Activated T-helper 1 cell treated with anti-CD3 and anti-CD28 coated beads, Interleukin-12 subunit alpha, Interleukin-12 subunit beta, Interleukin-2, Interleukin-4 antibody, amounts not matched to agents 30 ng/mL and 10 ng/mL and 1 ng/mL, durations not matched to agents 14 hours and 24 hours and 36 hours (primary cell): ENCODE measurements at regions of chr9 and their contacts with region 1.

Region 1: GRCh38 chr9:129139993-129140396 is 28.8 kb downstream of the PTPA start:
- DNase-seq: peak; percentile 78
- H3K4me3 Mint-ChIP-seq: peak overlapping the region; percentile 82
- H3K27ac Mint-ChIP-seq: peak overlapping the region; percentile 92
- H3K4me1 Mint-ChIP-seq: peaks cover 32% of the 10 kb centered on the region
- H3K27me3 Mint-ChIP-seq: no peaks in the 10 kb centered on the region

Region 2: GRCh38 chr9:128902351-128903078 is 237.5 kb before region 1 on chr9:
- intact Hi-C with region 1: no loop called
- DNase-seq: peak; percentile 83
- H3K4me3 Mint-ChIP-seq: peak overlapping the region; percentile 66
- H3K27ac Mint-ChIP-seq: peak overlapping the region; percentile 96
- H3K4me1 Mint-ChIP-seq: peaks cover 65% of the 10 kb centered on the region
- H3K27me3 Mint-ChIP-seq: no peaks in the 10 kb centered on the region

Region 3: GRCh38 chr9:129110740-129111527 is 29.1 kb before region 1 on chr9 and contains the starts of genes CRAT and PTPA:
- intact Hi-C with region 1: loop called (anchors 1 kb)
- DNase-seq: peak; percentile 89
- H3K4me3 Mint-ChIP-seq: peak within 1 kb of the TSS; percentile 96
- H3K27ac Mint-ChIP-seq: peak within 1 kb of the TSS; percentile 94
- H3K4me1 Mint-ChIP-seq: peaks cover 36% of the 10 kb centered on the region
- H3K27me3 Mint-ChIP-seq: no peaks in the 10 kb centered on the region
- total RNA-seq, gene CRAT: 9.9 and 10.0 TPM in 2 replicates
- total RNA-seq, gene PTPA: 105 and 114 TPM in 2 replicates

Region 4: GRCh38 chr9:129413537-129414376 is 273.8 kb after region 1 on chr9:
- intact Hi-C with region 1: loop called (anchors 2 kb)
- DNase-seq: peak; percentile 98
- H3K4me3 Mint-ChIP-seq: peak overlapping the region; percentile 83
- H3K27ac Mint-ChIP-seq: peak overlapping the region; percentile 98
- H3K4me1 Mint-ChIP-seq: peaks cover 22% of the 10 kb centered on the region
- H3K27me3 Mint-ChIP-seq: peaks cover 1% of the 10 kb centered on the region

Region 5: DNA sequence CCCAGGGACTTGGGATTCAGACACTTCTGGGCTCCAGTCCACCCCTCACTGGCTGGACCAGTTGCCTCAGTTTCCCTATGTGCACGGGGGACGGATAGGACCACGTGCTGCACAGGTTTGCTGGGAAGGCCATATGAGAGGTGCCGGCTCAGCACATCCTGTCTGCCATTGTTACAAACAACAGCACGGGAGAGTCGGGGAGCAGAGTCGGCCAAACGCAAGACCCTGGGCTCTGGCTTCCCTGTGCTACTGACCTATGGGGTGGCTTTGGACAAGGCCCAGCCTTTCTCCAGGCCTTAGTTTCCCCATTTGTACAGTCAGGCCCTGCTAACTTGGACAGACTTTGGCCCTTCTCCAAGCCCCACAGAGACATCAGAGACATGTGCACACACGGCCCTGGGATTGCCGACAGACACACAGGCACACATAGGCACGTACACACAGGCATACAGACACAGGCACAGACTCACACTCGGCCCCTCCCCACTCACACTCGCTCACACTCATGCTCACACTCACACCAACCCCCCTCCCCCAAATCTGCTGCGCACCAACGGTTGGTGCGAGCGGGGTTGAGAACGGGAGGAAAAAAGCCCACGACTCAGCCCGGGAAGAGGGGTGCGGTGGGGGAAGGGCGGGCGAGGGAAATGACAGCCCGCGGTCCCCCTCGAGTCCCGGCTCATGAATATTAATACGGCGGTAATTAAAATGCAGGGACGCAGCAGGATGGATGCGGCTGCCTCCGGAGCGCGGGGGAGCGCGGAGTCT is 347.8 kb after region 1 on chr9:
- intact Hi-C with region 1: loop called (anchors 5 kb)
- DNase-seq: peak; percentile 17
- H3K4me3 Mint-ChIP-seq: peak overlapping the region; percentile 92
- H3K27ac Mint-ChIP-seq: peak overlapping the region; percentile 98
- H3K4me1 Mint-ChIP-seq: peaks cover 60% of the 10 kb centered on the region
- H3K27me3 Mint-ChIP-seq: peaks cover 5% of the 10 kb centered on the region

Region 6: GRCh38 chr9:129610473-129611301 is 470.7 kb after region 1 on chr9:
- intact Hi-C with region 1: loop called (anchors 1 kb)
- DNase-seq: peak; percentile 62
- H3K4me3 Mint-ChIP-seq: peak overlapping the region; percentile 82
- H3K27ac Mint-ChIP-seq: peak overlapping the region; percentile 83
- H3K4me1 Mint-ChIP-seq: peaks cover 38% of the 10 kb centered on the region
- H3K27me3 Mint-ChIP-seq: peaks cover 5% of the 10 kb centered on the region

Region 7: DNA sequence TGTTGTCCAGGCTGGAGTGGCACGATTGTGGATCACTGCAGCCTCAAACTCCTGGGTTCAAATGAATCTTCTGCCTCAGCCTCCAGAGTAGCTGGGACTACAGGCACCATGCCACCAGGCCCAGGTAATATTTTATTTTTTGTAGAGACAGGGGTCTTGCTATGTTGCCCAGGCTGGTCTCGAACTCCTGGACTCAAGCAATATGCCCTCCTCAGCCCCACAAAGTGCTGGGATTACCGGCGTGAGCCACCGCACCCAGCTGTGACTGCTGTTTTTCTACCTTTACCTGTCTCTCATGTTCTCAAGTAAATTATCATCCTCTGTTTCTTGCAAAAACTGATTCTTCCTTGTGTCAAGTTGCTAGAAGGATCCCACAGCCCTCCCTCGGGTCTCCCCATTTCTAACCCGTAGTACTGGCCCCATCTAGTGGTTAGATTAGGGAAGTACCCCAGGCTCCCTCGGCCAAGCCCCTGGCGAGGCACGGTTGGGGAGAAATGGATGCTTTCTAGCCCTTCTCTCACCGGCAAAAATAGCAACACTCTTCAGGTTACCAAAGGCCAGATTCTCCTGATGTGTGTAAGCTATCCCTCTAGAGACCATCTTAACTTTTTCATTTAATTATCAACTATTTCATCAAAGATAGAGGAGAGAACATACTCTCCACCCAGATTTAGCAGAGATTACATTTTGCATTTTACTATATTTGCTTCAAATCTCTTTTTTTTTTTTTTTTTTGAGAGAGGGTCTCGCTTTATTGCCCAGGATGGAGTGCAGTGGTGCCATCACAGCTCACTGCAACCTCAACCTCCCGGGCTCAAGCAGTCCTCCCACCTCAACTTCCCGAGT is 643.7 kb after region 1 on chr9:
- intact Hi-C with region 1: loop called (anchors 1 kb)
- DNase-seq: peak; percentile 68
- H3K4me3 Mint-ChIP-seq: no peak overlapping the region
- H3K27ac Mint-ChIP-seq: no peak overlapping the region
- H3K4me1 Mint-ChIP-seq: peaks cover 5% of the 10 kb centered on the region
- H3K27me3 Mint-ChIP-seq: peaks cover 18% of the 10 kb centered on the region